WTC11 (cell line): ENCODE measurements at regions of chr9 and their contacts with region 1.

Region 1: GRCh38 chr9:127943731-127944144 is 6.1 kb upstream of the DPM2 start:
- DNase-seq: peak; percentile 96
- ATAC-seq: peak; percentile 84
- H3K4me3 Mint-ChIP-seq: no peak overlapping the region
- H3K27ac Mint-ChIP-seq: peak overlapping the region; percentile 58
- H3K4me1 Mint-ChIP-seq: peaks cover 22% of the 10 kb centered on the region
- H3K27me3 Mint-ChIP-seq: no peaks in the 10 kb centered on the region
- CTCF ChIP-seq: peak; percentile 84

Region 2: GRCh38 chr9:127930231-127931091 is 13.3 kb before region 1 on chr9 and contains the start of gene PIP5KL1:
- CTCF ChIA-PET with region 1: interaction called, 78 read pairs
- POLR2A ChIA-PET with region 1: interaction called, 8 read pairs
- DNase-seq: peak; percentile 95
- ATAC-seq: peak; percentile 62
- H3K4me3 Mint-ChIP-seq: peak within 1 kb of the TSS; percentile 65
- H3K27ac Mint-ChIP-seq: peak within 1 kb of the TSS; percentile 93
- H3K4me1 Mint-ChIP-seq: peaks cover 27% of the 10 kb centered on the region
- H3K27me3 Mint-ChIP-seq: peaks cover 29% of the 10 kb centered on the region
- CTCF ChIP-seq: no peak
- total RNA-seq, gene PIP5KL1: 15.8 to 20.2 TPM (median 16.8 TPM) in 3 replicates

Region 3: GRCh38 chr9:127980706-127981558 is 37.2 kb after region 1 on chr9 and contains the start of gene EEIG1:
- CTCF ChIA-PET with region 1: interaction called, 156 read pairs
- POLR2A ChIA-PET with region 1: interaction called, 7 read pairs
- DNase-seq: peak; percentile 98
- ATAC-seq: peak; percentile 91
- H3K4me3 Mint-ChIP-seq: peak within 1 kb of the TSS; percentile 95
- H3K27ac Mint-ChIP-seq: peak within 1 kb of the TSS; percentile 97
- H3K4me1 Mint-ChIP-seq: peaks cover 54% of the 10 kb centered on the region
- H3K27me3 Mint-ChIP-seq: no peaks in the 10 kb centered on the region
- CTCF ChIP-seq: no peak
- total RNA-seq, gene EEIG1: 42.2 to 66.4 TPM (median 51.3 TPM) in 3 replicates

Region 4: GRCh38 chr9:128020692-128021091 is 77.0 kb after region 1 on chr9:
- CTCF ChIA-PET with region 1: interaction called, 46 read pairs
- POLR2A ChIA-PET with region 1: interaction called, 4 read pairs
- DNase-seq: peak; percentile 30
- ATAC-seq: peak; percentile 74
- H3K4me3 Mint-ChIP-seq: no peak overlapping the region
- H3K27ac Mint-ChIP-seq: no peak overlapping the region
- H3K4me1 Mint-ChIP-seq: no peaks in the 10 kb centered on the region
- H3K27me3 Mint-ChIP-seq: no peaks in the 10 kb centered on the region
- CTCF ChIP-seq: peak; percentile 23; the same call in 1 of the 2 replicates

Region 5: DNA sequence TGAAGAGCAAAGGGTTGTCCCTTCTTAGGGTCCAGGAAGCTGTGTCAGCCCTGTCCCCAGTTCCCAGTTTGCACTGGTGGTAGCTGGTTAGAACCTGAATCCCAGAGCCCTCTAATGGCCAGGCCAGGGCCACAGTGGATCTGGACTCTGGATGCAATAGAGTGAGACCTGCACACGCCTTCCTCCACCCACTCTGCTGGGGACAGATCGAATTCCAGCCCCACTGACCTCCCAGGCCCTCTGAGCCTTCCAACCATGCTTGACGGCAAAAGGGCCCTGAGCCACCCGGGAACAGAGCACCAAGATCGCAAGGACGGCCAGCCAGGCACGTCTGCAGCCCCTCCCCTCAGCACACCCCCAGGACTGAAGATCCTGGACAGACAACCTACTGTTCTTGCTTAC is 99.7 kb after region 1 on chr9:
- CTCF ChIA-PET with region 1: interaction called, 20 read pairs
- POLR2A ChIA-PET with region 1: no interaction called
- DNase-seq: no peak
- ATAC-seq: peak; percentile 34
- H3K4me3 Mint-ChIP-seq: no peak overlapping the region
- H3K27ac Mint-ChIP-seq: no peak overlapping the region
- H3K4me1 Mint-ChIP-seq: peaks cover 6% of the 10 kb centered on the region
- H3K27me3 Mint-ChIP-seq: peaks cover 2% of the 10 kb centered on the region; the same call in 1 of the 2 replicates
- CTCF ChIP-seq: no peak

Region 6: DNA sequence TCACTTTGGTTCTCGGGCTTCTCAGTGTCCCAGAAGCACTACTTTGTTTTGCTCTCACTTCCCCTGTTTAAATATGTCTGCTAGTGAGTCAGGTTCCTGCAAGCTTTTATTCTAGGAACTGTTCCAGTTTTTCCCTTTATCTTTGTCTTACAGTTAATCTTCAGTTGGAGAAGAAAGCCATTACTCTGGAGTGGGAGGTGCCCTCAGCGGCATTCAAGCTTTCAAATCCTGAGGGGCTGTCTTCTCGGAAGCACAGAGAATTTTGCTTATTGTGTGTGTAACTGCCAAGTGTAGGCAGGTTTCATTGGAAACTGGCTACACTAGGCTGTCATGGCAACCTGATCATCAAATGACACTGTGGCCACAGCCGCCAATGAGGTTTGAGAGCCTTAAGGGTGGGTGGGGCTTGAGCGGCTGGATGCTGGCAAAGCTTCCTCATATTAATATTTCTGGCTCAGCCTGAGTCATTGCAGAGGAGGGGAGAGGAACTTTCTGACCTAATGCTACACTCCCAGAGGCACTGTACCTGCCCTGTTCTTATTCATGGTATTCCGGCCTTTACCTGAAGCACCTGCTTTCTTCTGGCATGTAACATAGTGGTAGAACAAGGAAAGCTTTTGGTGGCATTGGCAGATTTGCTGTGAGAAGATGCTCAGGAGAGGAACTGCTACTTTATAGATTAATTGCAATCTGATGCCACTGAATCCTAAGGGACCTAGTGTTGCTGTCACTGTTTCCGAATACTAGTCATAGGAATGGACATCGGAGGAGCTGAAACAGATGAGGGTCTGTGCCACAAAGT is 150.6 kb after region 1 on chr9:
- CTCF ChIA-PET with region 1: interaction called, 25 read pairs
- POLR2A ChIA-PET with region 1: interaction called, 4 read pairs
- DNase-seq: peak; percentile 64
- ATAC-seq: peak; percentile 25
- H3K4me3 Mint-ChIP-seq: no peak overlapping the region
- H3K27ac Mint-ChIP-seq: peak overlapping the region; percentile 90
- H3K4me1 Mint-ChIP-seq: peaks cover 44% of the 10 kb centered on the region
- H3K27me3 Mint-ChIP-seq: no peaks in the 10 kb centered on the region
- CTCF ChIP-seq: no peak

Region 7: GRCh38 chr9:128192601-128193371 is 249.0 kb after region 1 on chr9:
- CTCF ChIA-PET with region 1: no interaction called
- POLR2A ChIA-PET with region 1: no interaction called
- DNase-seq: peak; percentile 30
- ATAC-seq: no peak
- H3K4me3 Mint-ChIP-seq: peak overlapping the region; percentile 39
- H3K27ac Mint-ChIP-seq: no peak overlapping the region; the same call in 1 of the 2 replicates
- H3K4me1 Mint-ChIP-seq: peaks cover 11% of the 10 kb centered on the region
- H3K27me3 Mint-ChIP-seq: peaks cover 10% of the 10 kb centered on the region
- CTCF ChIP-seq: no peak

Region 8: DNA sequence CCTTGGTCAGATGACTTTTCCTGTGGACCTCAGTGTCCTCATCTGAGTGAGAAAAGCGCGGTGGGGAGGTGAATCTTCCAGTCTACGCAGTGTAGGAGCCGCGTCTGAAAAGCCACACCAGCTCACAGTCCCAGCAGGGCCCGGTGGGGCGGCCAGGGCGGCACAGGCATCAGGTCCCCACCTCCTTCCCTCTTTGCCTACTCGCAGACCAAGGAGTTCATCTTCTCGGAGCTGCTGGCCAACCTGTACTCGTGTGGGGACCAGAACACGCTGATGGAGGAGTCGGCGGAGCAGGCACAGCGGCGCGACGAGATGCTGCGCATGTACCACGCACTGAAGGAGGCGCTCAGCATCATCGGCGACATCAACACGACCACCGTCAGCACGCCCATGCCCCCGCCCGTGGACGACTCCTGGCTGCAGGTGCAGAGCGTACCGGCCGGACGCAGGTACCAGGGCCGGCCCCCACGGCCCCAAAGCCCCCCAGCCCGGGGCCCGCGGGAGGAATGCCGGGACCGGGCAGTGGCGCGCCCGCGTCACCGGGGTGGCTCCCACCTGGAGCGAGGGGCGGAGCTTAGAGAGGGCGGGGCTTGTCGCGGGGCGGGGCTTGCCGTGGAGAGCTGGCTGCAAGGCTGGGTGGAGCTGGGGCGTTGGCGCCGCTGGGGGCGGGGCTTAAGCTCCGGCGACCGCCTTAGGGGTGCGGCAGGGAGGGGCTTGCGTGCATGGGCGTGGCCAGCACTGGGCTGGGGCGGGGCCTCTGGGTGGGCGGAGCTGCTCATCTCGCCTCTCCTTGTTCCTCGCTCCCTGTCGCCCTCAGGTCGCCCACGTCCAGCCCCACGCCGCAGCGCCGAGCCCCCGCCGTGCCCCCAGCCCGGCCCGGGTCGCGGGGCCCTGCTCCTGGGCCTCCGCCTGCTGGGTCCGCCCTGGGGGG is 306.4 kb after region 1 on chr9:
- CTCF ChIA-PET with region 1: no interaction called
- POLR2A ChIA-PET with region 1: no interaction called
- DNase-seq: peak; percentile 98
- ATAC-seq: peak; percentile 91
- H3K4me3 Mint-ChIP-seq: peak overlapping the region; percentile 85
- H3K27ac Mint-ChIP-seq: peak overlapping the region; percentile 83
- H3K4me1 Mint-ChIP-seq: peaks cover 41% of the 10 kb centered on the region
- H3K27me3 Mint-ChIP-seq: peaks cover 9% of the 10 kb centered on the region
- CTCF ChIP-seq: no peak

Region 9: GRCh38 chr9:129278391-129279237 is 1334.9 kb after region 1 on chr9:
- CTCF ChIA-PET with region 1: no interaction called
- POLR2A ChIA-PET with region 1: no interaction called
- DNase-seq: peak; percentile 63
- ATAC-seq: peak; percentile 60
- H3K4me3 Mint-ChIP-seq: peak overlapping the region; percentile 22
- H3K27ac Mint-ChIP-seq: peak overlapping the region; percentile 78; the same call in 1 of the 2 replicates
- H3K4me1 Mint-ChIP-seq: peaks cover 52% of the 10 kb centered on the region
- H3K27me3 Mint-ChIP-seq: peaks cover 3% of the 10 kb centered on the region; the same call in 1 of the 2 replicates
- CTCF ChIP-seq: no peak